ENCODE measurements at regions of chr12 and their contacts with region 1.

Region 1: DNA sequence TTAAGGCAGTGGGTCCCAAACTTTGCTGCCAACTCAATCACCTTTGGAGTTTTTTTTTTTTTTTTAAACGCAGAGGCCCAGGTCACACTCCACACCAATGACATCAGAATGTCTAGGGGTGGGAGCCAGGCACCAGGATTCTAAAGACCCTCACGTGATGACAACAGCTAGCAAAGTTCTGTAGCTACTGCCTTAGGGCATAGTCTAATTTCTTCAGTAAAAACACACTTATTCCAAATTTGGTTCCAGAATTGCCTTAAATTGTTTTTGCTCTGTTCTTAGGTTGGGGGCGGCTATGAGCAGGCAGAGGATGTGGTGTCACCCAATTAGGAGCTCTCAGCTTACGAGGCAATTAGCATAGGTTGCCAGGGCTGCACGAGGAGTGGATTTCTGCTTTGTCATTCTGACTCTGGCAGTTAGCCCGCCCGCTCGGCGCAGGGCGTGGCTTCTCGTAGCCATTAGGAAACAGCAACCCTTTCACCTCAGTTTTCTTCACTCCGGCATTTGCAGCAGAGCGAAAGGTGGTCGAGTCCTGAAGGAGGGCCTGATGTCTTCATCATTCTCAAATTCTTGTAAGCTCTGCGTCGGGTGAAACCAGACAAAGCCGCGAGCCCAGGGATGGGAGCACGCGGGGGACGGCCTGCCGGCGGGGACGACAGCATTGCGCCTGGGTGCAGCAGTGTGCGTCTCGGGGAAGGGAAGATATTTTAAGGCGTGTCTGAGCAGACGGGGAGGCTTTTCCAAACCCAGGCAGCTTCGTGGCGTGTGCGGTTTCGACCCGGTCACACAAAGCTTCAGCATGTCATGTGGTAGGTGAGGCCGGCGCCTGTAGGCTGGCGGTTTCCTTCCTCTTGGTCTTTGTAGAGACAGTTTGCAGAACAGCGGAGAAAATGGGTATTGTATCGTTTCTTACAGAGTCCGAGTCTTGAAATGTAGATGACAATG is 16.7 kb upstream of the EID3 start:
- DNase-seq: peak; percentile 96
- H3K4me3 ChIP-seq: peak overlapping the region; percentile 19 to 52 (median 46)
- H3K27ac ChIP-seq: peak overlapping the region; percentile 76 to 94 (median 93)
- H3K4me1 ChIP-seq: peaks cover 20 to 32% of the 10 kb centered on the region in 2 donors
- H3K27me3 ChIP-seq: no peaks in the 10 kb centered on the region
- CTCF ChIP-seq: no peak
- POLR2A ChIP-seq: peak; percentile 35 to 90

Region 2: DNA sequence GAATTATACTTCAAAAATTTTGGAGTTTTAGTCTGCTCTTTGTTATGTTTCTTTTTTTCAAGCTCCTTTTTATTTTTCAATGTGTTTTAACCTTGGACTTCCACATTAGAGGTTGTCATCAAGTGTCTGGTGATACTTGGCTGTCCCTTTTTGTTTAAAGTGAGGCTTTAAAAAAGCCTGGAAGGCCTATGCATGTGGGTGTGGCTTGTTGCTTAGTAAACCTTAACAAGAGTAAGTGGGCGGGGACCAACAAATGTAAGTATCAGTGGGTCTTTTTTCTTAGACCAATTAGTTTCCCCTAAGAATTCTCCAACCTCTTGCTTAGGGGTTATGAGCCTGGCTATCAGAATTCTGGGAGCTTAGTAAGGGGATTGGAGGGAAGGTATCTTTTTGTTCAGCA is 196.1 kb before region 1 on chr12:
- intact Hi-C with region 1: no loop called
- DNase-seq: no peak
- H3K4me3 ChIP-seq: no peak overlapping the region
- H3K27ac ChIP-seq: no peak overlapping the region
- H3K4me1 ChIP-seq: no peaks in the 10 kb centered on the region
- H3K27me3 ChIP-seq: no peaks in the 10 kb centered on the region
- CTCF ChIP-seq: no peak
- POLR2A ChIP-seq: no peak

Region 3: GRCh38 chr12:104215638-104216297 is 71.0 kb before region 1 on chr12 and contains the start of gene TXNRD1:
- intact Hi-C with region 1: loop called (anchors 5 kb)
- DNase-seq: peak; percentile 85 to 87
- H3K4me3 ChIP-seq: peak within 1 kb of the TSS; percentile 11 to 36 (median 28)
- H3K27ac ChIP-seq: peak within 1 kb of the TSS; percentile 26 to 57 (median 37)
- H3K4me1 ChIP-seq: peaks cover 4 to 32% of the 10 kb centered on the region in 2 donors
- H3K27me3 ChIP-seq: no peaks in the 10 kb centered on the region
- CTCF ChIP-seq: peak; percentile 68 to 92 (median 83)
- POLR2A ChIP-seq: peak in 1 of 2 donors; percentile 59
- total RNA-seq, gene TXNRD1: 129 to 230 (median 199) TPM